ENCODE measurements at regions of chr6 and their contacts with region 1.

Region 1: GRCh38 chr6:35948725-35949124 is 27.8 kb upstream of the SRPK1 start:
- DNase-seq: no peak
- H3K4me3 Mint-ChIP-seq: no peak overlapping the region
- H3K27ac Mint-ChIP-seq: no peak overlapping the region
- H3K4me1 Mint-ChIP-seq: peaks cover 11% of the 10 kb centered on the region
- H3K27me3 Mint-ChIP-seq: no peaks in the 10 kb centered on the region
- CTCF ChIP-seq: no peak

Region 2: DNA sequence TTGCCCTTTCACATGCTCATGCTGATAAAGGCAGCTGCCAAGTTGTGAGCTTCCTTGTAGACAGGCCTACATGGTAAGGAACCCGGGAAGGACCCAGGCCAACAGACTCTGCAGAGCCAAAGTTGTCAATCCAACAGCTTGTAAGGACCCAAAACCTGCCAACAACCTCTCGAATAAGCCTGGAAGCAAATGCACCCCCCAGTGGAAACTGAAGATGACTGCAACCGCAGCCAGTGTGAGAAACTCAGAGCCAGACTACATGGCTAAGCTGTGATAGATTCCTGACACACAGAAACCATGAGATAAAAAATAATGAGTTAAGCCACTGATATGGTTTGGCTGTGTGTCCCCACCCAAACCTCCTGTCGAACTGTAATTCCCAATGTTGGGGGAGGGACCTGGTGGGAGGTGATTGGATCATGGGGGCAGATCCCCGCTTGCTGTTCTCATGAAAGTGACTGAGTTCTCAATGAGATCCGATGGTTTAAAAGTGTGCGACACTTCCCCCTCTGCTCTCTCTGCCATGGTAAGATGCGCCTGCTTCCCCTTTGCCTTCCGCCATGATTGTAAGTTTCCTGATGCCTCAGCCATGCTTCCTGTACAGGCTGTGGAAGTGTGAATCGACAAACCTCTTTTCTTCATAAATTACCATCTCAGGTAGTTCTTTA is 191.1 kb before region 1 on chr6:
- CTCF ChIA-PET with region 1: no interaction called
- intact Hi-C with region 1: loop called (anchors 10 kb)
- DNase-seq: peak; percentile 61
- H3K4me3 Mint-ChIP-seq: no peak overlapping the region
- H3K27ac Mint-ChIP-seq: no peak overlapping the region
- H3K4me1 Mint-ChIP-seq: peaks cover 21% of the 10 kb centered on the region
- H3K27me3 Mint-ChIP-seq: peaks cover 21% of the 10 kb centered on the region
- CTCF ChIP-seq: peak; percentile 45

Region 3: DNA sequence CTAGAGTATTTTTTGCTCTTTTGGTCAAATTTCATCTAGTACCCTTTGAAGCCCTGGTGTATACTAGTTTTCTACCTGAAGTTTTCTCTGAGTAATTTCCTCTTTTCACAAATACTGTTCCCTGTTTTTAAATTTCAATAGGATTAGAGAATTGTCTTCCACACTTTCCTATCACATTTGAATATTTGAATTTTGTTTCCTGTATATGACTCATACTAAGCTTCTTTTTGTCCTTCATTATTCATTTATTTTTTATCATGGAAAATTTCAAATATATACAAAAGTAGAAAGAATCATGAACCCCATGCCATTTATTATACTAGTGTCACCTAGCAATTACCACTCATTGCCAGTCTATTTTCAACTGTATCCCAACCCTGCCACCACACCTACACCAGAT is 90.9 kb before region 1 on chr6:
- CTCF ChIA-PET with region 1: no interaction called
- intact Hi-C with region 1: no loop called
- DNase-seq: no peak
- H3K4me3 Mint-ChIP-seq: no peak overlapping the region
- H3K27ac Mint-ChIP-seq: peak overlapping the region; percentile 49
- H3K4me1 Mint-ChIP-seq: no peaks in the 10 kb centered on the region
- H3K27me3 Mint-ChIP-seq: no peaks in the 10 kb centered on the region
- CTCF ChIP-seq: no peak